CD8-positive, alpha-beta T cell (primary cell): ENCODE measurements at regions of chr2 and their contacts with region 1.

Region 1: DNA sequence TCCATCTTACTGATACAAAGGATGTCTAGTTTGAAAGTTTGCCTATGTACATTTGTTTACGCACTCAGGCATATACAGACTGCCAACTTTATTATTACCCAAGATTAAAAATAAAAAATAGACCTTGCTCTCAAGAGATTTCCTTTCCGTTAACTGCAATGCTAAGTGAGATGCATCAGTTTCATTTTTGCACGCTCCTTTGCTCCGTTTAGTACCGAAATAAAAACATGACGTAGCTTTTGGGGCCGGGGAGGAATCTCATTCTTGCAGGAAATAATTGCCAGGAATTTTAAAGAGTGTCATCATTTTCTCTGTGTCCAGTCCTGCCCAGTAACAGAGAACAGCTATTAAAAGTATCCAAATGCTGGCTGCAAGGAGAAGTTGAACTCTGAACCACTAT is 169.5 kb downstream of the SLC8A1 start:
- DNase-seq: no peak
- ATAC-seq: no peak
- H3K4me3 ChIP-seq: no peak overlapping the region
- H3K4me3 Mint-ChIP-seq: no peak overlapping the region
- H3K27ac ChIP-seq: no peak overlapping the region
- H3K27ac Mint-ChIP-seq: no peak overlapping the region
- H3K4me1 ChIP-seq: no peaks in the 10 kb centered on the region
- H3K4me1 Mint-ChIP-seq: no peaks in the 10 kb centered on the region
- H3K27me3 ChIP-seq: no peaks in the 10 kb centered on the region
- H3K27me3 Mint-ChIP-seq: no peaks in the 10 kb centered on the region
- CTCF ChIP-seq: no peak

Region 2: GRCh38 chr2:40302751-40303325 is 20.4 kb after region 1 on chr2:
- CTCF ChIA-PET with region 1: no interaction called
- POLR2A ChIA-PET with region 1: no interaction called
- intact Hi-C with region 1: loop called in 1 of 2 experiments (anchors 2 kb)
- DNase-seq: no peak
- ATAC-seq: no peak
- H3K4me3 ChIP-seq: no peak overlapping the region
- H3K4me3 Mint-ChIP-seq: no peak overlapping the region
- H3K27ac ChIP-seq: no peak overlapping the region
- H3K27ac Mint-ChIP-seq: no peak overlapping the region
- H3K4me1 ChIP-seq: no peaks in the 10 kb centered on the region
- H3K4me1 Mint-ChIP-seq: no peaks in the 10 kb centered on the region
- H3K27me3 ChIP-seq: no peaks in the 10 kb centered on the region
- H3K27me3 Mint-ChIP-seq: no peaks in the 10 kb centered on the region
- CTCF ChIP-seq: no peak